ENCODE measurements at regions of chr12 and their contacts with region 1.

Region 1: DNA sequence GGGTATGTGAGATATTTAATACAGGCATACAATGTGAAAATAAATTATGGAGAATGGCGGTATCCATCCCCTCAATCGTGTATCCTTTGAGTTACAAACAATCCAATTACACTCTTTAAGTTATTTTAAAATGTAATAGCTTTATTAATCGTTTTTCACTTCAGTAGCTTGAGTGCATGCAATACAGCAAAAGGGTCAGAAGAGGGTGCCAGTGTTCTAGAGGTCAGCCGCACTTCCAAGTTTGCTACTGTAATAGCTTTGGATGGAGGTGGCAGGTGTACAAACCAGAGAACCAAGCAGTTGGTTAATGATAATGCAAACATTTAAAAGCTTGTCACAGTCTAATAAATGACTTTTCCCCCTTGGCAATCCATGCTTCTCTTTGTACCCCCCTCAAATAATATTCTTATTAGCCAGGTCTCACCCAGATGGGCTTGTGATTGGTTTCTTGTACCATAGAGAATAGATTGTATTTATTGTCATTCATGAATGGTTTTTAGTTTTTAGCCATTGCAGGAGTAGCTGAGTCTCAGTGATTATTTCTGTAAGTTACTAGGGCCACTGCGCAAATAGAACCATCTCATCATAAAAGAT is 127.0 kb downstream of the ERC1 start:
- DNase-seq: peak in 1 of 2 experiments; percentile 69
- H3K4me3 ChIP-seq: no peak overlapping the region
- H3K27ac ChIP-seq: no peak overlapping the region
- H3K4me1 ChIP-seq: no peaks in the 10 kb centered on the region
- H3K27me3 ChIP-seq: peaks cover 9 to 29% (median 24%) of the 10 kb centered on the region in 4 experiments
- CTCF ChIP-seq: peak; percentile 31 to 82 (median 74)
- EP300 ChIP-seq: no peak
- POLR2A ChIP-seq: no peak
- RAD21 ChIP-seq: peak; percentile 93 to 94

Region 2: GRCh38 chr12:1044215-1044614 is 73.9 kb before region 1 on chr12:
- CTCF ChIA-PET with region 1: no interaction called
- POLR2A ChIA-PET with region 1: no interaction called
- DNase-seq: no peak
- H3K4me3 ChIP-seq: no peak overlapping the region
- H3K27ac ChIP-seq: no peak overlapping the region
- H3K4me1 ChIP-seq: peaks cover 0 to 4% (median 3%) of the 10 kb centered on the region in 4 experiments; a peak in 4 of 7 replicates
- H3K27me3 ChIP-seq: no peaks in the 10 kb centered on the region
- CTCF ChIP-seq: no peak
- EP300 ChIP-seq: no peak
- POLR2A ChIP-seq: no peak
- RAD21 ChIP-seq: no peak

Region 3: GRCh38 chr12:1176191-1176590 is 58.1 kb after region 1 on chr12:
- CTCF ChIA-PET with region 1: interaction called, 12 read pairs
- POLR2A ChIA-PET with region 1: no interaction called
- DNase-seq: no peak
- H3K4me3 ChIP-seq: no peak overlapping the region
- H3K27ac ChIP-seq: no peak overlapping the region
- H3K4me1 ChIP-seq: no peaks in the 10 kb centered on the region
- H3K27me3 ChIP-seq: no peaks in the 10 kb centered on the region
- CTCF ChIP-seq: no peak
- EP300 ChIP-seq: no peak
- POLR2A ChIP-seq: no peak
- RAD21 ChIP-seq: no peak

Region 4: GRCh38 chr12:1435456-1435855 is 317.4 kb after region 1 on chr12:
- CTCF ChIA-PET with region 1: interaction called, 11 read pairs
- POLR2A ChIA-PET with region 1: no interaction called
- DNase-seq: no peak
- H3K4me3 ChIP-seq: no peak overlapping the region
- H3K27ac ChIP-seq: no peak overlapping the region
- H3K4me1 ChIP-seq: no peaks in the 10 kb centered on the region
- H3K27me3 ChIP-seq: no peaks in the 10 kb centered on the region
- CTCF ChIP-seq: no peak
- EP300 ChIP-seq: no peak
- POLR2A ChIP-seq: no peak
- RAD21 ChIP-seq: no peak

Region 5: GRCh38 chr12:1576410-1577241 is 458.6 kb after region 1 on chr12:
- CTCF ChIA-PET with region 1: interaction called, 66 read pairs
- POLR2A ChIA-PET with region 1: no interaction called
- DNase-seq: no peak
- H3K4me3 ChIP-seq: no peak overlapping the region
- H3K27ac ChIP-seq: no peak overlapping the region
- H3K4me1 ChIP-seq: no peaks in the 10 kb centered on the region
- H3K27me3 ChIP-seq: no peaks in the 10 kb centered on the region; a peak in 4 of 7 replicates
- CTCF ChIP-seq: no peak
- EP300 ChIP-seq: no peak
- POLR2A ChIP-seq: no peak
- RAD21 ChIP-seq: no peak

Region 6: DNA sequence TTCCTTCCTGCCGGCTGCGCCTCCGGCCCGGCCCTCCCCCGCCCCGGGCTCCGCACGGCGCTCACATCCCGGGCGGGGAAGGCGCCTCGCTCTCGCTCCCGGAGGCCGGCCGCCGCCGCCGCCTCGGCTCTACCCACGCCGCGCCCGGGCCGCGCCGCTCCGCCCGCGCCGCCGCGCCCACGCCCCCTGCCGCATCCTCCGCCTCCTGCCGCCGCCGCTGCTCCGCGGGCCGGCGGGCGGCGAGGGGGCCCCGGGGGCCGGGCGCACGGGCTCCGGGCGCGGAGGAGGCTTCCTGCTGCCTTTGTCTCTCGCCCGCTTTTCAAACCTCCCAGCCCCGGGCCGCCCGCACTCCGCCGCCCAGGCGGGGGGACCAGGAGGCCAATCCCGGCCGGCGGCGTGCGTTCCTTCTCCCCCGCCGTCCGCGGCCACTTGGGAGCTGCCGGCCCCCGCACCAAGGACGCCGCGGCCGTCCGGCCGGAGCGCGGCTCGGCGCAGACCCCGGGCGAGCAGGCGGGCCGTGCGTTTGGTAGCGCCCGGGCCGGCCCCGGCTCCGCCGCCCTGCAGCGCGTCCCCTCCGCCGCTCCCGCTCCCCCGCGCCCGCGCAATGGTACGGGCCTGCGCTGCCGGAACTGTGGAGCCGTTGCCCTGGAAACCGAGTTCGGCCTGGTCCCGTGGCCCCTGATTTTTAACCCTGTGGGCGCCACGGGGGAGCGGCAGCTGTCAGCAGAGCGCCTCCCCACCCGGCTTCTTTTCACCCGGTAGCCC is 476.4 kb after region 1 on chr12 and contains the start of gene FBXL14:
- CTCF ChIA-PET with region 1: interaction called, 10 read pairs
- POLR2A ChIA-PET with region 1: no interaction called
- DNase-seq: peak in 1 of 2 experiments; percentile 92
- H3K4me3 ChIP-seq: peak within 1 kb of the TSS; percentile 64 to 71 (median 66)
- H3K27ac ChIP-seq: peak within 1 kb of the TSS; percentile 34; the same call in 1 of the 2 replicates
- H3K4me1 ChIP-seq: peaks cover 14 to 34% (median 21%) of the 10 kb centered on the region in 4 experiments
- H3K27me3 ChIP-seq: peaks cover 21 to 61% (median 50%) of the 10 kb centered on the region in 4 experiments
- CTCF ChIP-seq: peak in 1 of 3 experiments; percentile 5; a peak in 1 of 4 replicates
- EP300 ChIP-seq: peak in 1 of 2 experiments; percentile 86; a peak in 1 of 3 replicates
- POLR2A ChIP-seq: peak in 1 of 2 experiments; percentile 28; a peak in 1 of 3 replicates
- RAD21 ChIP-seq: no peak
- total RNA-seq, gene FBXL14: 5.5 and 6.2 TPM in 2 replicates